GM18951 (cell line): ENCODE measurements at regions of chr17 and their contacts with region 1.

Region 1: DNA sequence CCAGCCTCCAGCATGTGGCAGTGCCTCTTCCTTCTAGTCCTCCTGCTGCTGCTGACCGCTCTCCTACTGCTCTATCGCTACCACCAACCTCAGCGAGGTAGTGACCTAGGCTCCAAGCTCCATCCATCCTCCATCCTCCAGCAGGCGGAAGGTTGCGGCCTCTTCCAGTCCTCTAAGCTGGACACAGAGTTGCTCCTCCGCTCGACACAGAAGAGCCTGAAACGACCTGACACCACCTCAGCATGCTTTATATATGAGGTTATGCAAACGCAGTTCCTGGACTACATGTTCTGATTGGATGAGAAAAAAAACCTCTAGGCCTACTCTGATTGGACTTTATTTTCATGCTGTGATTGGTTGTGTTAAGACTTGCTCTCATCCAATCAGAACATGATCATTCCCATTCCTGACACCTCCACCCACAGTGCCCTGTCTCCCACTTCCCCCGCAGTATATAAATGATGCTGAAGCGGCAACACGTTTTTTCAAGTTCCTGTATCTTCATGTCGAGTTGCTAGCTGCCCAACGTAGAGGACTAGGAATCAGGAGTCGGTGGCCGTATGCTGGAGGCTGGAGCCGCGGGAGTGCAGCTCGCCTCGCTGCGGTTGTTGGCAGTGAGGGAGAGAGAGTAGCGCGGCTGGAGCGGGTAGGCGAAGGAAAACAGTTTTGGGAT is 398.1 kb downstream of the KCNJ18 start:
- POLR2A ChIP-seq: no peak

Region 2: DNA sequence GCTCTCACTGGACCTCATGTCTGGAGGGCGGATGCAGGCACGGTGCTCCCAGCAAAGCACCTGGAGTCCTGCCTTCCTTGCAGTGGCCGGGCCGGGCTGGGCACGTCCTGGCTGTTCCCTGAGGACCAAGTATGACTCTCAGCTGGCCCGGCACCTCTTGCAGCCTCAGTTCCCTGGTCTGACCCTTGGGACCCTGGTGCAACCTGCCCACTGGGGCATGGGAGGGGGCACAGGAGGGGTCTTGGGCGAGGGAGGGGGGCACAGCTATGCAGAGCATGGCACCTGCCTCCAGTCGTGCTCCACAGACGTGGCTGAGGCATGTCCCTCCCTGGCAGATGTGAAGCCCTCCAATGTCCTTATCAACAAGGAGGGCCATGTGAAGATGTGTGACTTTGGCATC is 786.3 kb before region 1 on chr17:
- in situ Hi-C with region 1: loop called (anchors 25 kb)
- POLR2A ChIP-seq: no peak

Region 3: DNA sequence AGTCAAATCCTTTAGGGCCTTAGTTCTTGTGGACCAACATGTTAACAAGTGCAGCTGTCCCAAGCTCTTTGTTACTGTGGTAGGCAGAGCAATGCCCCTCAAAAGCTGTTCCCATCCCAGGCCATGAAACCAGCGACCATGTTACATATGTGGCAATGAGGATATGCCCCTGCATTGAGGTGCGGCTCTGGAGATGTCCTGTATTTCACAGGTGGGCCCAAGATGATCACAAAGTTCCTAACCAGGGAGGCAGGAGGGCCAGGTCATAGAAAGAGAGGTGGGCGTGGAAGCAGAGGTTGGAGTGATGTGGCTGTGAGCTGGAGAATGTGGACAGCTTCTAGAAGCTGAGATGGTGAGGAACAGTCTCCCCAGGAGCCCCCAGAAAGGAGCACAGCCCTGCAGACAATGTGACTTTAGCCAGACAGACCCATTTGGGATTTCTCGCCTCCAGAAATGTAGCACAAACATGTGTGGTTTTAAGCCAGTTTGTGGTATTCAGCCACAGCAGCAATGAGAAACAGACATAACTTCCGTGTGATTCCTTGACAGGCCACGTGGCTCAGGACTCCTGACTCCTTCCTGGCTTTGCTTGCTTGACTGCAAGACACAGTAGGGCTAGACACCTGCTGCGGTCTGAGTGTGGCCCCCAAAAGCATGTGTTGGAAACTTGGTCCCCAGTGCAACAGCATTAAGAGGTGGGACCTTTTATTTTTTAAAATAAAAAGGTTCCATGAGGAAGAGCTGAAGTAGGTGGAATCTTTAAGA is 380.2 kb after region 1 on chr17:
- in situ Hi-C with region 1: no loop called
- POLR2A ChIP-seq: no peak